Endothelial cell of umbilical vein (primary cell): ENCODE measurements at regions of chr4 and their contacts with region 1.

Region 1: DNA sequence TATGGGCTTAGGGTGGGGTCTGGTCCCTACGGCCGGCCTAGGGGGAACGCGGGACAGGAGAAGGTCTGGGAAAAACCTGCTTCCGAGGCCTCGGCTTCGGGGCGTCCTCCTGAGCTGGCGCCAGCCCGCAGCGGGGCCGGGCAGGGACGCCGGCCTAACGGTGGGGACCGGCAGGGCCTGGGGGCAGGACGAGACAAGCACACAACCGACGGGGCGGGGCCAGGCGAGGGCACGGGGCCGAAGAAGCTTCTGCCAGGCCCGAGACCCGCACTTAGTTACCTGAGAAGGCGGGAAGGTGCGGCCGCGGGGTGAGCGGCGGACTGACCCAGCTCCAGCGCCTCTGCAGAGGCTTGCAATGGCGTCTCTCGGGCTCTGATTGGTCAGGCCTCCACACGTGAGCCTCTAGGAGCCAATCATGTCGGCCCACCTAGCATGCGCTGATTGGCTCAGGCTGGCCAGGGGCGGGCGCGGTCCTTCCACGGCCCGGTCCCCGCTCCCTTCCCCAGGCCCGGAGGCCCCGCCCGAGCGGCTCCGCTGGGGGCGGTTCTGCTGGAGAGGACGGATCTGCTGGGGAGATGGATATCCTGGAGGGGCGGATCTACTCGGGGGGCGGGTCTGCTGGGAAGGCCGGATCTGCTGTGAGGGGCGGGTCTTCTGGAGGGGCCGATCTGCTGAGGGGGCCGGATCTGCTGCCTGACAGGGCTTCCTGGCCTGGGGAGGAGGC is 44.3 kb downstream of the CPLX1 start:
- DNase-seq: peak; percentile 100
- H3K4me3 ChIP-seq: peak overlapping the region; percentile 75 to 99 (median 91)
- H3K27ac ChIP-seq: peak overlapping the region; percentile 91
- H3K4me1 ChIP-seq: peaks cover 17% of the 10 kb centered on the region
- H3K27me3 ChIP-seq: peaks cover 0 to 2% of the 10 kb centered on the region in 2 experiments
- CTCF ChIP-seq: no peak
- POLR2A ChIP-seq: peak; percentile 90

Region 2: DNA sequence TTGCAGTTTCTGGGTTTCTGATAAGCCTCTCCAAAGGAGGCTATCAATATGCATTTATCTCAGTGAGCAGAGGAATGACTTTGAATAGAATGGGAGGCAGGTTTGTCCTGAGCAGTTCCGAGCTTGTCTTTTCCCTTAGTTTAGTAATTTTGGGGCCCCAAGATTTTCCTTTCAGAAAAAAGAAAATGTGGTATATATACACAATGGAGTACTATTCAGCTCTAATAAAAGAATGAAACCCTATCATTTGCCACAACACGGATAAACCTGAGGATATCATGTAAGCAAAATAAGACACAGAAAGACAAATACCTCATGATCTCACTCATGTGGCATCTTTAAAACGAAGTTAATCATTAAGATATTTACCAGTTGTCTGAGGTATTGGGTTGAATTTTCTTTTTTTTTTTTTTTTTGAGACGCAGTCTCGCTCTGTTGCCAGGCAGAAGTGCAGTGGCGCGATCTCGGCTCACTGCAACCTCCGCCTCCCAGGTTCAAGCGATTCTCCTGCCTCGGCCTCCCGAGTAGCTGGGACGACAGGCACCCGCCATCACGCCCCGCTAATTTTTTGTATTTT is 283.2 kb before region 1 on chr4:
- CTCF ChIA-PET with region 1: no interaction called
- POLR2A ChIA-PET with region 1: no interaction called
- dilution Hi-C with region 1: no loop called
- intact Hi-C with region 1: no loop called
- DNase-seq: peak; percentile 18
- H3K4me3 ChIP-seq: peak overlapping the region; percentile 75 to 90 (median 80)
- H3K27ac ChIP-seq: peak overlapping the region; percentile 68
- H3K4me1 ChIP-seq: peaks cover 11% of the 10 kb centered on the region
- H3K27me3 ChIP-seq: no peaks in the 10 kb centered on the region
- CTCF ChIP-seq: no peak
- POLR2A ChIP-seq: no peak

Region 3: GRCh38 chr4:742742-743311 is 38.8 kb before region 1 on chr4:
- CTCF ChIA-PET with region 1: interaction called, 13 read pairs
- POLR2A ChIA-PET with region 1: no interaction called
- dilution Hi-C with region 1: no loop called
- intact Hi-C with region 1: no loop called
- DNase-seq: peak; percentile 52
- H3K4me3 ChIP-seq: no peak overlapping the region
- H3K27ac ChIP-seq: no peak overlapping the region
- H3K4me1 ChIP-seq: no peaks in the 10 kb centered on the region
- H3K27me3 ChIP-seq: no peaks in the 10 kb centered on the region
- CTCF ChIP-seq: peak; percentile 77 to 93
- POLR2A ChIP-seq: no peak

Region 4: GRCh38 chr4:825238-825835 is 43.7 kb after region 1 on chr4:
- CTCF ChIA-PET with region 1: interaction called, 3 read pairs
- POLR2A ChIA-PET with region 1: no interaction called
- dilution Hi-C with region 1: no loop called
- intact Hi-C with region 1: loop called (anchors 5 kb)
- DNase-seq: no peak
- H3K4me3 ChIP-seq: peak overlapping the region in 1 of 3 experiments; percentile 23
- H3K27ac ChIP-seq: no peak overlapping the region
- H3K4me1 ChIP-seq: no peaks in the 10 kb centered on the region
- H3K27me3 ChIP-seq: peaks cover 26 to 29% of the 10 kb centered on the region in 2 experiments
- CTCF ChIP-seq: no peak
- POLR2A ChIP-seq: no peak

Region 5: DNA sequence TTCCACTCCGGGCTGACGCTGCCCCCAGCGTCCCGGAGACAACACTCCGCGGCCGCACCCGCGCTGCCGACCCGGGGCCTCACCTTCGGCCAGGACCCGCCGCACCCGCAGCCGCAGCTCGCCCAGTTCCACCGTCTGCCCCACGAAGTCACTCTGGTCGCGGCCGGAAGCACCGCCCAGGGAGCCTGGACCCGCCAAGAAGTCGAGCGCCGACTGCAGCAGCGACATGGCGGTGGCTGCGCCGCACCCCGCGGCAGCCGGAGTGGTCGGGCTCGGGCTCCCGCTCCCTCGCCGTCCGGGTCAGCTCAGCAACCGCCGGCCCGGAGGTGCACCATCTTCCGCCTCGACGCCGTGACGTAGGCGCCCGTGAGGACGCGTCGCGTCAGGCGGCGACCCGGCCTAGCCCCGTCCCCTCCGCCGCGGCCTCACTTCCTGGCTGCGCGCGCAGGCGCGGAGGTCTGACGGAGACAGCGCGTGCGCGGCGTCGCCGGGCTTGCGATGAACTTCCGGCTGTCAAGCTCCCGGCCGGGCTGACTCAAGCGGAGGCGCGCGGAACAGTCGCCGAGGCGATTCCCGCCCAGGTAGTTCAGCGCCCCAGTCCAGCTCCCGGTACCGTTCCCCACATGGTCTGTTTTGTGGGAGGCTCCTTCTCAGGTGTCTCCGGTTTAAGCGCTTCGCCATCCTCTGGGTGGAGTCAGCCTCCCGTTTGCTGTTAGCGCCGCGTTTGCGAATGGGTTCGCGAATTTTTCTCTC is 150.5 kb after region 1 on chr4 and contains the starts of genes GAK and TMEM175:
- CTCF ChIA-PET with region 1: no interaction called
- POLR2A ChIA-PET with region 1: no interaction called
- dilution Hi-C with region 1: no loop called
- intact Hi-C with region 1: loop called (anchors 2 kb)
- DNase-seq: peak; percentile 98
- H3K4me3 ChIP-seq: peak within 1 kb of the TSS; percentile 82 to 83 (median 82)
- H3K27ac ChIP-seq: peak within 1 kb of the TSS; percentile 71
- H3K4me1 ChIP-seq: peaks cover 9% of the 10 kb centered on the region
- H3K27me3 ChIP-seq: no peaks in the 10 kb centered on the region
- CTCF ChIP-seq: no peak
- POLR2A ChIP-seq: peak; percentile 92
- total RNA-seq, gene GAK: 109 and 110 TPM in 2 replicates
- total RNA-seq, gene TMEM175: 16.5 and 21.9 TPM in 2 replicates